Kidney (tissue), 22 donors: ENCODE measurements at regions of chr3 and their contacts with region 1.

Region 1: DNA sequence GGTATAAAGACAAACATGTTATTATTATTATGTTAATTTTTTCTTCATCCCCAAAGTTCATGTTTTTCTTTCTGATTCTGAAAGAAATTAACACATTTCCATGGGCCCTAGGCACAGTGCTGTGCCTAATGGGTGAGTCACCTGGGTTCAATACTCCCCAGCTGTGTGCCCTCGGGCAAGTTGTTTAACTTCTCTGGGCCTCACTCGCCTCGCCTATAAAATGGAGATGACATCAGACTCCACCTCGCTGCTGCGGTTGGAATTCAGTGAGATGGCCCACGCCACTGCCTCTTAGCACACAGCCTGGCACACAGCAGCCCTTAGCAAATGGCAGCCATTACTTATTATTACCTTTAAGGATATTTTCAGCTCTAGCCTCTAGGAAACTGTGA is 22.6 kb downstream of the DNASE1L3 start:
- DNase-seq: no peak
- H3K4me3 ChIP-seq: no peak overlapping the region
- H3K27ac ChIP-seq: no peak overlapping the region
- H3K4me1 ChIP-seq: no peaks in the 10 kb centered on the region
- H3K27me3 ChIP-seq: no peaks in the 10 kb centered on the region
- CTCF ChIP-seq: no peak

Region 2: DNA sequence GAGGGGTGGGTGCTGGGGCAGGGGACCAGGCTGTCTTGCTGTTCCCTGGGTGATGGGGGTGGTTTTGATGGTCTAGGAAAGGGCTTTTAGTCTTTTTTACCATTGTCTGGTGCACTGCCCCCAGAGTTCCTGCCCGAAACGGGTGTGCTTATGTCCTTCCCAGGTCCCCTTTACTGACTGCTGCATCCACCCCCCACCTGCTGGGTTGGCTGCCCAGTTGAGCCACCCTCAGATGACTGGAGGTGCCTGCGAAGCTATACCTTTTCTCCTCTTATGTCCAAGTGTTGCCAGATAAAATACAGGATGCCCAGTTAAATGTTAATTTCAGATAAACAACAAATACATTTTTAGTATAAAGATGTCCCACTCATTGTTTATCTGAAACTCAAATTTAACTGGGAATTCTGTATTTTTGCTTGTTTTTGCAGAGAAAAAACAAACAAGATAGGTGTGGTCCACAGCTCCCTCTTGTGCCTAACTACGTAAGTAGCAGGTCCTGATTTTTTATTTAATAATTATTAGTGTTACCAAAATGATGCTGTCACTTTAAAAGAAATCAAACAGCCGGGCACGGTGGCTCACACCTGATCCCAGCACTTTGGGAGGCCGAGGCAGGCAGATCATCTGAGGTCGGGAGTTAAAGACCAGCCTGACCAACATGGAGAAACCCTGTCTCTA is 111.8 kb after region 1 on chr3:
- intact Hi-C with region 1: loop called (anchors 5 kb)
- DNase-seq: peak in 2 of 5 donors; percentile 41 to 70
- H3K4me3 ChIP-seq: no peak overlapping the region
- H3K27ac ChIP-seq: no peak overlapping the region
- H3K4me1 ChIP-seq: peaks cover 0 to 9% (median 6%) of the 10 kb centered on the region in 3 donors
- H3K27me3 ChIP-seq: no peaks in the 10 kb centered on the region
- CTCF ChIP-seq: no peak